ENCODE measurements at regions of chr7 and their contacts with region 1.

Region 1: DNA sequence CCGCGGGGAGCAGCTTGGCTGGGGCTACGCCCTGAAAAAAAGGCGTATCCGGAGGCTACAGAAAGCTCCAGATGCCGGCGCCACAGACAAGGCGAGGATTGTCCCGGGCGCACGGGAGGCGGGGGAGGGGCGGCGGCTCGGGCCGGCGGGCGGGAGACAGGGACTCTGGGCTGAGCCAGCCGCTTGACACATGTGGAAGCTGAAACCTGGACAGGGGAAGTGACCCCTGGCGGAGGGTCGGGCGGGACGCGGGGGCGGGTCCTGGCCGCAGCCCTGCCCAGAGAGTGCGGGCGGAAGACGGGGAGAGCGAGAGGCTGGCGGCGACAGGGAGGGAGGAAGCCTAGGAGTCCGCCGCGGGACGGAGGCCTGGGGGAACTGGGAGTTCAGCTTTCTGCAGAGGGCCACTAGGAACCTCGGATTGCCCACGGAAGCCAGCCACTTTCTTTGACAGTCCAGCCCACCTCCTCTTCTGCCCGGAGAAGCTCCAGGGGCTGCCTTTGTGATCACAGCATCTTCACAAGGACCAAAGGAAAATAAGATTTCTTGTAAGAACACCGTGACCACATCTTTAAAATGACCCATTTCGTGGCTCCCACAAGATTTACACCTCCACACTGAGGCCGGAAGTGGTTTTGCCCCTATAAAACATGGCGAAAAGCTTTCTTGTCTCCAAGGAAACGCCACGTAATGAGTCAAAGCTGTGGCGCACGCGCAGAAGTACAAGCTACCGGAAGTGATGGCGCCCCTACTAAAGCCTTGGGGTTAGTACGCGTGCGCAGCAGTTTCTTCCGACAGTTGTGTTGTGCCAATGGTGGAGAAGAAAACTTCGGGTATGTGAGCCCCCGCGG is at the starts of genes PLOD3 and ZNHIT1:
- DNase-seq: peak; percentile 87 to 99 (median 94)

Region 2: GRCh38 chr7:101244375-101245146 is 26.9 kb after region 1 on chr7 and contains the start of gene FIS1:
- intact Hi-C with region 1: loop called (anchors 2 kb)
- DNase-seq: peak; percentile 89 to 99 (median 94)